ENCODE measurements at regions of chr4 and their contacts with region 1.

Region 1: DNA sequence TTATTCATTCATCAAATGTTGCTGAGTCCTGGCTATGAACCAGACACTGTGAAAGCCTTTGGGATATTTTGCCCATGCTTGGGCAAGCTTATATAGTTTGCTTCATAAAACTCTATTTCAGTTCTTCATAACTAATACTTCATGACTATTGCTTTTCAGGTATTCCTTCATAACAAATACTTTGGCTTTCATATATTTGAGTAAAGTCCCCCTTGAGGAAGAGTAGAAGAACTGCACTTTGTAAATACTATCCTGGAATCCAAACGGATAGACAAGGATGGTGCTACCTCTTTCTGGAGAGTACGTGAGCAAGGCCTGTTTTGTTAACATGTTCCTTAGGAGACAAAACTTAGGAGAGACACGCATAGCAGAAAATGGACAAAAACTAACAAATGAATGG is 1.7 kb upstream of the AFP start:
- DNase-seq: peak; percentile 24
- H3K4me3 Mint-ChIP-seq: no peak overlapping the region
- H3K27ac Mint-ChIP-seq: no peak overlapping the region
- H3K4me1 Mint-ChIP-seq: no peaks in the 10 kb centered on the region
- H3K27me3 Mint-ChIP-seq: peaks cover 48% of the 10 kb centered on the region
- CTCF ChIP-seq: peak; percentile 40

Region 2: GRCh38 chr4:72169861-72170260 is 1264.5 kb before region 1 on chr4:
- CTCF ChIA-PET with region 1: no interaction called
- POLR2A ChIA-PET with region 1: no interaction called
- intact Hi-C with region 1: no loop called
- DNase-seq: no peak
- H3K4me3 Mint-ChIP-seq: no peak overlapping the region
- H3K27ac Mint-ChIP-seq: no peak overlapping the region
- H3K4me1 Mint-ChIP-seq: no peaks in the 10 kb centered on the region
- H3K27me3 Mint-ChIP-seq: no peaks in the 10 kb centered on the region
- CTCF ChIP-seq: no peak

Region 3: DNA sequence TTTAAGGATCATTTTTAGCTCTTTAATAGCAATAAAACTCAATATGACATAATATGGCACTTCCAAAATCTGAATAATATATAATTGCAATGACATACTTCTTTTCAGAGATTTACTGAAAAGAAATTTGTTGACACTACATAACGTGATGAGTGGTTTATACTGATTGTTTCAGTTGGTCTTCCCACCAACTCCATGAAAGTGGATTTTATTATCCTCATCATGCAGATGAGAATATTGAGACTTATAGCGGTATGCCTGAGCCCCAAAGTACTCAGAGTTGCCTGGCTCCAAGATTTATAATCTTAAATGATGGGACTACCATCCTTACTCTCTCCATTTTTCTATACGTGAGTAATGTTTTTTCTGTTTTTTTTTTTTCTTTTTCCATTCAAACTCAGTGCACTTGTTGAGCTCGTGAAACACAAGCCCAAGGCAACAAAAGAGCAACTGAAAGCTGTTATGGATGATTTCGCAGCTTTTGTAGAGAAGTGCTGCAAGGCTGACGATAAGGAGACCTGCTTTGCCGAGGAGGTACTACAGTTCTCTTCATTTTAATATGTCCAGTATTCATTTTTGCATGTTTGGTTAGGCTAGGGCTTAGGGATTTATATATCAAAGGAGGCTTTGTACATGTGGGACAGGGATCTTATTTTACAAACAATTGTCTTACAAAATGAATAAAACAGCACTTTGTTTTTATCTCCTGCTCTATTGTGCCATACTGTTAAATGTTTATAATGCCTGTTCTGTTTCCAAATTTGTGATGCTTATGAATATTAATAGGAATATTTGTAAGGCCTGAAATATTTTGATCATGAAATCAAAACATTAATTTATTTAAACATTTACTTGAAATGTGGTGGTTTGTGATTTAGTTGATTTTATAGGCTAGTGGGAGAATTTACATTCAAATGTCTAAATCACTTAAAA is 14.9 kb before region 1 on chr4:
- CTCF ChIA-PET with region 1: interaction called, 13 read pairs
- POLR2A ChIA-PET with region 1: no interaction called
- intact Hi-C with region 1: no loop called
- DNase-seq: no peak
- H3K4me3 Mint-ChIP-seq: no peak overlapping the region
- H3K27ac Mint-ChIP-seq: no peak overlapping the region
- H3K4me1 Mint-ChIP-seq: no peaks in the 10 kb centered on the region
- H3K27me3 Mint-ChIP-seq: peaks cover 30% of the 10 kb centered on the region
- CTCF ChIP-seq: no peak